A549 (cell line): ENCODE measurements at regions of chr11 and their contacts with region 1.

Region 1: DNA sequence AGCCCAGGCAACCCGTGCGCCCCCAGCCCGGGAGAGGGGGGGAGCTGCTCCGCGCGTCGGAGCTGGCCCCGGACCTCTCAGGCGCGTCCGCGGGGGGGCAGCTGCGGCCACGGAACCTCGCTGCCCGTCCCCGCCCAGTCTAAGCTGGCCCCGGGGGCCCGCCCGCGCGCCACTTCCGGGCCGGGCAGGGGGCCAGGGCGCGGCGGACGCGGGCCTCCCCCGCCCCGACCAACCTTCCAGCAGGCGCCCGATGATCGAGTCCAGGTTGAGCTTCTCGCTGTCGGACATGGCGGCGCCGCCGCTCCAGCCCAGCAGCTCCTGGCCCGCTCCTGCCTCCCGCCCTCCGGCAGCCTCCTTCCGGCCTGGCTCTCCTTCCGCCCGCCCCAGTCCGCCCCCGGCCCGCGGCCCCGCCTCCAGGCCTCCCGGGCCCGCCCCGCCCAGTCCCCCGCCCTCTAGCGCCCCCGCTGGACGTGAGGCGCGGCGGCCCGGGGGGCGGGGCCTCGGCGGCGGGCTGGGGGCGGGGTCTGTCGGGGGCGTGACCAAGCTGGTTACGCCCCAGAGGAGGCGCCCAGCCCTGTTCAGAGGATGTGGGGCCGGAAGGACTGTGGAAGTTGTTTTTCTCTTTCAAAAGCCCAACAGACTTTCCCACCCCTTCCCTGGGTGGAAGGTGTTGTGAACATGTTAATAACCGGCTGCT is at the start of gene PPP1CA:
- DNase-seq: peak; percentile 87 to 89
- ATAC-seq: peak; percentile 84 to 87
- H3K4me3 ChIP-seq: peak within 1 kb of the TSS; percentile 80
- H3K27ac ChIP-seq: peak within 1 kb of the TSS; percentile 89 to 98
- H3K4me1 ChIP-seq: peaks cover 15% of the 10 kb centered on the region
- CTCF ChIP-seq: peak; percentile 75
- EP300 ChIP-seq: no peak
- POLR2A ChIP-seq: peak; percentile 78
- RAD21 ChIP-seq: peak; percentile 12 to 63; a peak in 4 of 5 replicates
- polyA plus RNA-seq, gene PPP1CA: 174 and 178 TPM in 2 replicates

Region 2: GRCh38 chr11:67337257-67337656 is 64.4 kb before region 1 on chr11:
- CTCF ChIA-PET with region 1: no interaction called
- POLR2A ChIA-PET with region 1: no interaction called
- DNase-seq: no peak
- ATAC-seq: no peak
- H3K4me3 ChIP-seq: no peak overlapping the region
- H3K27ac ChIP-seq: no peak overlapping the region
- H3K4me1 ChIP-seq: no peaks in the 10 kb centered on the region
- CTCF ChIP-seq: no peak
- EP300 ChIP-seq: no peak
- POLR2A ChIP-seq: no peak
- RAD21 ChIP-seq: no peak

Region 3: DNA sequence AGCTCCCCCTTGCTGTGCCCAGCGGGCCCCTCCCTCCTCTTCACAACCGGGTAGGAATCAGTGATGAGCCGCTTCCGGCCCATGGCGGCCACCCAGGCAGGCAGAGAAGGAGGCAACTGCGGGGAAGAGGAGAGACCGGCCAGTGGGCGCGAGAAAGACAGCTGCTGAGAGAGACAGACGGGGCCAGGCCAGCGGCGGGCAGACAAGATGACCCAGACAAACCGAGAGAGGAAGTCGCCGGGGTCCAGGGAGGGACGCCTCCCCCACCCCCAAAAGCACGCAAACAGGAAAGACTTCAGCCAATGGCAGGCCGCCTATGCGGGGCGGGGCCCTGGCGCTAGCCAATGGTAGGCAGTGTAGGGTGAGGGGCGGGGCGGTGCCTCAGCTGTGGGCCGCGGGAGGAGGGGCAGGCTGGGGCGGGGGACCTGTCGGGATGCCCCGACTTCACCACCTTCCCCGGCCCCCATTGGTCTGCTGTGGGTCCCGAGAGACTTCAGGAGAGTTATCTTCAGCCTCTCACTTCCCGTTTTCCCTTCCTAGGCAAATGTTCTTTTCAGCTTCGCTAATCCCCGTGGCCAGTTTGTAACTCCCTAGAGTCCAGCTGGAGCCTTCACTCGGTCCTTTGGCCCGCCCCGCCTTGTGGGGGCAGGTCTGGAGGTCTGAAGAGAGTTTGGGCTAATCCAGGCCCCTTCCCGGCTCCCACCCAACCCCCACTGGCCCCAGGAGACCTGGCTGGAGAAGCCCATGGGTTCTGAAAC is 48.1 kb before region 1 on chr11 and contains the start of gene POLD4:
- CTCF ChIA-PET with region 1: interaction called, 1,913 read pairs
- POLR2A ChIA-PET with region 1: interaction called, 6 read pairs
- DNase-seq: peak; percentile 95 to 97
- ATAC-seq: peak; percentile 46 to 74
- H3K4me3 ChIP-seq: peak within 1 kb of the TSS; percentile 69
- H3K27ac ChIP-seq: peak within 1 kb of the TSS; percentile 93 to 98
- H3K4me1 ChIP-seq: peaks cover 87% of the 10 kb centered on the region
- CTCF ChIP-seq: no peak
- EP300 ChIP-seq: no peak
- POLR2A ChIP-seq: peak; percentile 30; the same call in 1 of the 2 replicates
- RAD21 ChIP-seq: no peak
- polyA plus RNA-seq, gene POLD4: 140 and 157 TPM in 2 replicates

Region 4: DNA sequence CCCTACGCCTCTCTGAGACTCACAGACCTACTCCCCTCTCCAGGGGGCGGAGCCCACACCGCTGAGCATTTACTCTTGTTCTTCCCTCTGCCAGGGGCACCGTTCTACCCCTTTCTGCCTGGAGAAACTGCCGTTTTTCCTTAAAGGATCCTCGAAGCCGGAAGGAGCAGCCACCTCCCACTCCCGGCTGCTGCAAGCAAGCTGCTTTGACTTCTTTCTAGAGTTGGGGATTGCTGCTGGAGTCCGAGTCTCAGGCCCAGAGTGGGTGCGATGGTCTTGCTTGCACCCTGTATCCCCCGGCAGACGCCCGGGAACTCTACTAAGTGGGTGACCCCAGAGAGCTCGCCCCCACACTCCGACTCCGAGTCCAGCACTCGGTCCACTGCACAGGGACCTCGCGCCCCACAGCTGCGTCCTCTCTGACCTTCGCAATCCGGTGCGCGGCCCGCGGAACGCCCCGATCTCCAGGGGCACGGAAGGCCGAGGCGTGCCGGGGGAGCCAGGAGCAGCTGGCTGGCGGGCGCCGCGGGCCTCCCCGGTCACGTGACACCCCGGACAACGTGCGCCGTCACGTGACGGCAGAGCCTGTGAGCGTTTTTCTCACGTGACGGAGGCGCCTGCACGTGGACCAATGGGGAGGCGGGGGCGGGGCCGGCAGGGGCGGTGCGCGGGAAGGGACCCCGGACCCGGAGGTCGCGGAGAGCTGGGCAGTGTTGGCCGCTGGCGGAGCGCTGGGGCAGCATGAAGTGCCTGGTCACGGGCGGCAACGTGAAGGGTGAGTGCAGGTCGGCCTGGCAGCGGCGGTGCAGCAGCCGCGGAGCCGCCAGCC is 10.1 kb before region 1 on chr11 and contains the start of gene RAD9A:
- CTCF ChIA-PET with region 1: interaction called, 626 read pairs
- POLR2A ChIA-PET with region 1: interaction called, 21 read pairs
- DNase-seq: peak; percentile 94 to 97
- ATAC-seq: peak; percentile 59 to 77
- H3K4me3 ChIP-seq: peak within 1 kb of the TSS; percentile 77
- H3K27ac ChIP-seq: peak within 1 kb of the TSS; percentile 85 to 90
- H3K4me1 ChIP-seq: peaks cover 19% of the 10 kb centered on the region; the same call in 2 of the 3 replicates
- CTCF ChIP-seq: no peak
- EP300 ChIP-seq: no peak; a peak in 1 of 5 replicates
- POLR2A ChIP-seq: peak; percentile 51
- RAD21 ChIP-seq: no peak
- polyA plus RNA-seq, gene RAD9A: 19.0 and 19.6 TPM in 2 replicates

Region 5: DNA sequence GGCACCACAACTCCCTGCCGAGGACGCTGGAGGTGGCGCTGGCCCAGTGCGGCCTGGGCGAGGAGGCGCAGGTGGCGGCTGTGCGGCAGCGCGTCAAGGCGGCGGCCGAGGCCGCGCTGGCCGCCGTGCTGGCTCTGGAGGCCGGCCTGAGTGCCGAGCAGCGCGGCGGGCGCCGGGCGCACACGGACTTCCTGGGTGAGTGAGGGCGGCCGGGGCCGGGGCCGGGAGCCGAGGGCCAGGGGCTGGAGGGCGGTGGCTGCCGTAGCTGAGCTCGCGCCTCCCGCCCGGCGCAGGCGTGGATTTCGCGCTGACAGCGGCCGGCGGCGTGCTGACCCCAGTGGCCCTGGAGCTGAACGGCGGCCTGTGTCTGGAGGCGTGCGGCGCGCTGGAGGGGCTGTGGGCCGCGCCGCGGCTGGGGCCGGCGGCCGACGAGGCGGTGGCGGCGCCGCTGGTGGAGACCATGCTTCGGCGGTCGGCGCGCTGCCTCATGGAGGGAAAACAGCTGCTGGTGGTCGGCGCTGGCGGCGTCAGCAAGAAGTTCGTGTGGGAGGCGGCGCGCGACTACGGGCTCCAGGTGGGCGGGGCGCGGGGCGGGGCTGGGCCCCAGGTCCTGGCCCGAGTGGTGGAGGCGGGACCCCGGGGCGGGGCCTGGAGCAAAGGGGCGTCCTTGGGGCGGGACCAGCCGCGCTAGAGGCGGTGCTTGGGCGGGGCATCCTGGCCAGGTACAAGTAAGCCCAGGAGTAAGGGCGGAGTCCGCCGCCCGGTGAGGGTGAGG is 19.2 kb after region 1 on chr11:
- CTCF ChIA-PET with region 1: interaction called, 30 read pairs
- POLR2A ChIA-PET with region 1: interaction called, 12 read pairs
- DNase-seq: peak; percentile 80 to 92
- ATAC-seq: peak; percentile 68 to 89
- H3K4me3 ChIP-seq: peak overlapping the region; percentile 57
- H3K27ac ChIP-seq: peak overlapping the region; percentile 75 to 90
- H3K4me1 ChIP-seq: peaks cover 26% of the 10 kb centered on the region
- CTCF ChIP-seq: no peak
- EP300 ChIP-seq: no peak
- POLR2A ChIP-seq: peak; percentile 61
- RAD21 ChIP-seq: no peak

Region 6: GRCh38 chr11:67468835-67469811 is 67.5 kb after region 1 on chr11 and contains the start of gene TMEM134:
- CTCF ChIA-PET with region 1: interaction called, 11 read pairs
- POLR2A ChIA-PET with region 1: interaction called, 14 read pairs
- DNase-seq: peak; percentile 81 to 94
- ATAC-seq: peak; percentile 75 to 78
- H3K4me3 ChIP-seq: peak within 1 kb of the TSS; percentile 67
- H3K27ac ChIP-seq: peak within 1 kb of the TSS; percentile 83 to 97
- H3K4me1 ChIP-seq: peaks cover 28% of the 10 kb centered on the region
- CTCF ChIP-seq: peak; percentile 53
- EP300 ChIP-seq: no peak
- POLR2A ChIP-seq: peak; percentile 73
- RAD21 ChIP-seq: peak; percentile 54 to 74
- polyA plus RNA-seq, gene TMEM134: 18.1 and 18.8 TPM in 2 replicates